ENCODE measurements at regions of chr12 and their contacts with region 1.

Region 1: GRCh38 chr12:53071591-53072551 is 7.3 kb downstream of the SPRYD3 start:
- DNase-seq: peak; percentile 82
- H3K4me3 ChIP-seq: no peak overlapping the region
- H3K27ac ChIP-seq: peak overlapping the region; percentile 52 to 90
- H3K4me1 ChIP-seq: peaks cover 26 to 30% of the 10 kb centered on the region in 2 experiments
- H3K27me3 ChIP-seq: no peaks in the 10 kb centered on the region
- CTCF ChIP-seq: peak; percentile 45
- EP300 ChIP-seq: no peak
- RAD21 ChIP-seq: peak; percentile 35

Region 2: DNA sequence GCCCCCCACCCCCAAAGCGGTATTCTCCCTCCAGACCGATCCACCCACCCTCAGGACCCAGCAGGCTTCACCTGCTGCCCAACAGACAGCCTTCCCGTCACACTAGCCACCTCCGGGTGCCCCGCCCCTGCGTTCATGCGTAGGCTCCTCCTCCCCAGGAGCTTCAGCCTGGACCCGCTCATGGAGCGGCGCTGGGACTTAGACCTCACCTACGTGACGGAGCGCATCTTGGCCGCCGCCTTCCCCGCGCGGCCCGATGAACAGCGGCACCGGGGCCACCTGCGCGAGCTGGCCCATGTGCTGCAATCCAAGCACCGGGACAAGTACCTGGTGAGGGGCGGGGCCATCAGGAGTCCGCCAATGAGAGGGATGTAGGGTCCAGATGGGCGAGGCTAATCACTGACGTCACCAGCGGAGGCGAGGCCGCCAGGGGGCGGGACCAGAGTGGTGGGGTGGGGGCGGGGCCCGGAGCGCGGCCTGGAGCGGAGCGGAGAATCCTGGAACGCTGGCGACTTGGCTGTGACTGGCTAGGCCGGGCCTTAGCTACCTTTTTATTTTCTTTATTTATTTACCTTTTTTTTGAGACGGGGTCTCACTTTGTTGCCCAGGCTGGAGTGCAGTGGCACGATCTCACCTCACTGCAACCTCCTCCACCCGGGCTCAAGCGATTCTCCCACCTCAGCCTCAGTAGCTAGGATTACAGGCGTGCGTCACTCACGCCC is 17.6 kb before region 1 on chr12:
- CTCF ChIA-PET with region 1: interaction called, 182 read pairs
- POLR2A ChIA-PET with region 1: interaction called, 4 read pairs
- DNase-seq: peak; percentile 97
- H3K4me3 ChIP-seq: peak overlapping the region; percentile 66
- H3K27ac ChIP-seq: peak overlapping the region; percentile 35 to 78; a peak in 3 of 4 replicates
- H3K4me1 ChIP-seq: peaks cover 25 to 46% of the 10 kb centered on the region in 2 experiments
- H3K27me3 ChIP-seq: no peaks in the 10 kb centered on the region
- CTCF ChIP-seq: no peak
- EP300 ChIP-seq: no peak
- RAD21 ChIP-seq: no peak

Measured in SK-N-SH (cell line).